Transverse colon (tissue), 4 donors: ENCODE measurements at regions of chr14 and their contacts with region 1.

Region 1: GRCh38 chr14:23555882-23556699 is at the start of gene THTPA:
- DNase-seq: peak; percentile 94
- H3K4me3 ChIP-seq: peak within 1 kb of the TSS; percentile 60 to 93 (median 86)
- H3K27ac ChIP-seq: peak within 1 kb of the TSS; percentile 92 to 95 (median 94)
- H3K4me1 ChIP-seq: peaks cover 15 to 33% (median 20%) of the 10 kb centered on the region in 4 donors
- H3K27me3 ChIP-seq: no peaks in the 10 kb centered on the region
- CTCF ChIP-seq: peak in 1 of 5 experiments; percentile 11
- EP300 ChIP-seq: no peak
- POLR2A ChIP-seq: peak; percentile 50
- total RNA-seq, gene THTPA: 6.8 to 34.0 (median 26.0) TPM

Region 2: DNA sequence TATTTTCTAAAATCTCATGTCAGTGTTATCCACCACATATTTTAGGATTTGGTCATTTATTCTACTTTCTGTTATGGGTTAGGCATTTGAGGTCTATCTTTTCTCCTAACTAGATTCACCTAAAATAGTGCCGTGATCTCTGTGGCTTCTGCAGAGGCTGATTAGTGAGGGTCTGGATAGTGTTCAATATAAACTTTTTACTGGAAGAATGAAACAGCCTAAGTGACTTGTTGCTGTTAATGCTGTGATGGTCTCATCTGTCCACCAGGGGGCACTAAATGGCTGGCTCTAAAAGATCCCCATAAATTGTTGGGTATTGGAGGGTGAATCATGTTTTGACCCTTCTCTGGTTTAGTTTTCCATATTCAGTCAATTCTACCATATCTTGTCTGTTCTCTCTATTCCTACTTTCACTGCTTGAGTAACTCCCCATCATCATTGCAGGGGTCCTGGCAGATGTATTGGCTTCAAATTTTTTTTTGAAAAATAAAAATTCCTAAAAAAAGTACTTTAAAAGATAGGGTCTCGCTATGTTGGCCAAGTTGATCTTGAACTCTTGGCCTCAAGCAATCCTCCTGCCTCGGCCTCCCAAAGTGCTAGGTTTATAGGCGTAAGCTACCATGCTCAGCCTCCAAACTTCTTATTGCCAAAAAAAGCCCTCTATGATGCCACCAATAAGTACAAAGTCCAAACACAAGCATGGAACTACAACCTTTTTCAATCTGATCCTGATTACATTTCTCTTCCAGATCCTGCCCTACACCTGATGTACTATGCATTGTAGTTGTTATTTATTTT is 227.9 kb before region 1 on chr14:
- in situ Hi-C with region 1: loop called in 2 of 4 experiments (anchors 25 kb)
- intact Hi-C with region 1: no loop called
- DNase-seq: peak; percentile 76
- H3K4me3 ChIP-seq: no peak overlapping the region
- H3K27ac ChIP-seq: no peak overlapping the region
- H3K4me1 ChIP-seq: peaks cover under 1 to 8% (median 2%) of the 10 kb centered on the region in 4 donors
- H3K27me3 ChIP-seq: no peaks in the 10 kb centered on the region
- CTCF ChIP-seq: peak; percentile 85 to 90 (median 86)
- EP300 ChIP-seq: no peak
- POLR2A ChIP-seq: no peak

Region 3: DNA sequence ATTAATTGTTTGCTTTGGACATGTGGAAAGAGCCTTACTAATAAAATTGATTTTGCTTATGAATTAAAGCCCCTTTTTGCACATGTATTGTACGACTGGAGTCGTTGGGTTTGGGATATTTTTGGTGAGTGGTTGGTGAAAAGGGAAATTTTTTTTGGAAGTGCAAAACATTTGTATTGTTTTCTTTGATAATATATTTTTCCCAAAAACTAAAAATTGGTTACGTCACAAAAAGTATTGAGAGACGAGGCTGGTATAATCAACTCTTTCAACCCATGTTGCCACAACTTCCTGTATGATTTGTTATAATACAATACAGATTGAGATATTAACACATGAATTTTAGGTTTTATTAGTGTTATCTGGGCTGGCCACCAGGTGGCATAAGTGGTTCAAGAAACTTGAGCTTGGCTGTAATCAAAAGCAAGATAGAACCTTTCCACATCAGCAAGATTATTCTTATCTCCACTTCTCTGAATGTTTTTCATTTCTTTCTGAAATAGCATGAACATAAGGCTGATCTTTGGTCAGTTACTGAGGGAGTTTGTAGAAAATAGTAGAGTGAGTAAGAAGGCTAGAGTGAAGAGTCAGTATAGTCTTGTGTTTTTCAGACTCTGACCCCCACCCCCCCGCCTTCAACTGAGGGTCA is 77.9 kb before region 1 on chr14:
- in situ Hi-C with region 1: loop called (anchors 5 to 10 kb)
- intact Hi-C with region 1: no loop called
- DNase-seq: peak; percentile 51
- H3K4me3 ChIP-seq: no peak overlapping the region
- H3K27ac ChIP-seq: no peak overlapping the region
- H3K4me1 ChIP-seq: no peaks in the 10 kb centered on the region
- H3K27me3 ChIP-seq: no peaks in the 10 kb centered on the region
- CTCF ChIP-seq: peak; percentile 65 to 77 (median 69)
- EP300 ChIP-seq: no peak
- POLR2A ChIP-seq: no peak

Region 4: GRCh38 chr14:23665375-23666192 is 109.5 kb after region 1 on chr14:
- in situ Hi-C with region 1: no loop called
- intact Hi-C with region 1: no loop called
- DNase-seq: no peak
- H3K4me3 ChIP-seq: no peak overlapping the region
- H3K27ac ChIP-seq: no peak overlapping the region
- H3K4me1 ChIP-seq: no peaks in the 10 kb centered on the region
- H3K27me3 ChIP-seq: no peaks in the 10 kb centered on the region
- CTCF ChIP-seq: peak; percentile 23 to 41 (median 39)
- EP300 ChIP-seq: no peak
- POLR2A ChIP-seq: no peak